ENCODE measurements at regions of chr17 and their contacts with region 1.

Region 1: GRCh38 chr17:32382526-32383223 is 32.7 kb downstream of the ZNF207 start:
- DNase-seq: no peak
- ATAC-seq: no peak
- H3K4me3 ChIP-seq: no peak overlapping the region
- H3K27ac ChIP-seq: no peak overlapping the region
- H3K4me1 ChIP-seq: peaks cover 6% of the 10 kb centered on the region; the same call in 1 of the 2 replicates
- H3K27me3 ChIP-seq: no peaks in the 10 kb centered on the region
- CTCF ChIP-seq: no peak

Region 2: GRCh38 chr17:32349854-32350665 is 32.6 kb before region 1 on chr17 and contains the start of gene ZNF207:
- CTCF ChIA-PET with region 1: no interaction called
- POLR2A ChIA-PET with region 1: interaction called, 13 read pairs
- intact Hi-C with region 1: no loop called
- DNase-seq: peak; percentile 95
- ATAC-seq: peak; percentile 94
- H3K4me3 ChIP-seq: peak within 1 kb of the TSS; percentile 99
- H3K27ac ChIP-seq: peak within 1 kb of the TSS; percentile 85
- H3K4me1 ChIP-seq: peaks cover 12% of the 10 kb centered on the region; the same call in 1 of the 2 replicates
- H3K27me3 ChIP-seq: no peaks in the 10 kb centered on the region
- CTCF ChIP-seq: no peak
- total RNA-seq, gene ZNF207: 76.5 and 84.6 TPM in 2 replicates

Region 3: DNA sequence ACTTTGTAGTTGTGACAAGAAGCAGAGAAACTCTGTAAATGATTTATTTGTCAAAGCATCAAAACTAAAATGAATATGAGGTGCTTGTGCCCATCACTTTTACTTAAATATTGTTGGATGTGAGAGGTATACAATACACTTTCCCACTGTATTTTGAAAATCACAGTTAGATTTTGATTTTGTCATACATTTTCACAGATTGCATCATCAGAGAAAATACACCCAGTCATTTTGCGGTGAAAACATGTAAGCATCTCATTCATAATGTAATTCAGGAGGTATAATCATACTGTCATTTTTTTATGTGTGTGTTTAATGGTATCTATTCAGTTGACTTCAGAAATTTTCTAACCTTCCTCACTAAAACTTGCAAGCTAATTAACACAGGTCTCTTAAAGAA is 21.4 kb before region 1 on chr17:
- CTCF ChIA-PET with region 1: no interaction called
- POLR2A ChIA-PET with region 1: no interaction called
- intact Hi-C with region 1: no loop called
- DNase-seq: no peak
- ATAC-seq: no peak
- H3K4me3 ChIP-seq: no peak overlapping the region
- H3K27ac ChIP-seq: no peak overlapping the region
- H3K4me1 ChIP-seq: no peaks in the 10 kb centered on the region
- H3K27me3 ChIP-seq: no peaks in the 10 kb centered on the region
- CTCF ChIP-seq: no peak

Measured in PC-3 (cell line).